ENCODE measurements at regions of chr15 and their contacts with region 1.

Region 1: DNA sequence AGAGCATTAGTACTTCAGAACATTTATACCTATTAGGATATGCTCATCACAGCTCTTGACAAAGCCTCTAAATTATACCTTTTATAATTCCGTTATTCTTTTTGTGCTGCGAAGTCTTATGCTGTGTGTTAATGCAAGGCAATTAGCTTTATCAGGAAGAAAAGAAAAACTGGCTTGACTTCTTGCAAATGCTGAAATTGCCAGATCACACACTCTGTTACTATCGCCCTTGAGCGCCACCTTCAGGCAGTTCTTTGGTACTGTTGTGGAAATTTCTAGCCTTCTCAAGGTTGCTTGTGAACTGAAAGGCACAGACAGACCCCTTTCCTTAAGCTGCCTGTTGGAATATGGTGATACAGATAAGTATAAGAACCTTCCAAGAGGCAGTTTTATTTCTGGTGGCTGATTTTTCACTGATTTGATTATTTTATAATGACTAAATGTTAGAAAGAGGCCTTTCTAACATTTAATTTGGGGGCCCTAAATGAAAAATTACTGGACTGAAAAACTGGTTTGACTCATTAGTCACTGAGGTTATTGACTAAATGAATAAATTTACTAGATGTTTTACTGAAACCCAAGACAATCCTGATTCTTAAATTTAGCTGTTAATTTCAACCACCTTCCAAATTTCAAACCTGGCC is 126.2 kb upstream of the RASGRP1 start:
- DNase-seq: peak; percentile 49
- CTCF ChIP-seq: peak; percentile 77

Region 2: DNA sequence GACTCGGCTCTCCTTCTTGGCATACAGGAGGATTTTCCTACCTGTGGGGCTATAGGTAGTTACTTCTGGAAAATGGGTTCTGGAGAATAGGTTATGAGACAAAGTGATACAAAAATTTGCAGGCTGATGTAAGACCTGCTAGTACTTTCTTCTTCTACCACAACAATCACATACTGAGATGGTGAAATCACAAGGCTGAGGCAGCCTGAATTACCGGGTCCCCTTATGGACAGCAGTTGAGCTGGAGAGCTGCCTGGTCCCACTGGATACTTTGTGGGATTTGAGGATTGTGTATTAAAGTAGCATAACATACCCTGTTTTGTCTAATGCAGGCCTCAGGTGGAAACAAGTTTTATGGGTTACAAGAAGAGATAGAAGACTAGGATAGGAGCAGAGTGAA is 323.3 kb before region 1 on chr15:
- CTCF ChIA-PET with region 1: no interaction called
- POLR2A ChIA-PET with region 1: no interaction called
- DNase-seq: no peak
- CTCF ChIP-seq: no peak

Region 3: DNA sequence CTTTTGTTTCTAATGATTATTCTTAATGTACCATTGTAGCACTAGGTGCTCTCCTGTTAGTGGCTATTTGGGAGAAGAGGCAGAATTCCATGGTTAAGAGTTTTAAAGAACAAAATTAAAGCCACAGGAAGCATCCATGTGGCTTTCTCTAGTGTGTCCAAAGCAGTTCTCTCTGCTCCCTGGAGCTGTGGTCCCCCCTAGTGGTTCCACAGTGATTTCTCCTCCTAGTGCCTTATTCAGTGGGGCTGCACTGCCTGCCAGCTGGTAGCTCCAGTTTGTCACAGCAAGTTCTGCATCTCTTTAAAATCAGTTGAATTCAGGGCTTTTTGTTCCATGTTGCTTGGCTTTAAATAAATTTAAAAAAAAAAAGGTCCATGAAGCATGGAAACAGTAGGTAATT is 276.5 kb before region 1 on chr15:
- CTCF ChIA-PET with region 1: no interaction called
- POLR2A ChIA-PET with region 1: no interaction called
- DNase-seq: no peak
- CTCF ChIP-seq: no peak

Region 4: DNA sequence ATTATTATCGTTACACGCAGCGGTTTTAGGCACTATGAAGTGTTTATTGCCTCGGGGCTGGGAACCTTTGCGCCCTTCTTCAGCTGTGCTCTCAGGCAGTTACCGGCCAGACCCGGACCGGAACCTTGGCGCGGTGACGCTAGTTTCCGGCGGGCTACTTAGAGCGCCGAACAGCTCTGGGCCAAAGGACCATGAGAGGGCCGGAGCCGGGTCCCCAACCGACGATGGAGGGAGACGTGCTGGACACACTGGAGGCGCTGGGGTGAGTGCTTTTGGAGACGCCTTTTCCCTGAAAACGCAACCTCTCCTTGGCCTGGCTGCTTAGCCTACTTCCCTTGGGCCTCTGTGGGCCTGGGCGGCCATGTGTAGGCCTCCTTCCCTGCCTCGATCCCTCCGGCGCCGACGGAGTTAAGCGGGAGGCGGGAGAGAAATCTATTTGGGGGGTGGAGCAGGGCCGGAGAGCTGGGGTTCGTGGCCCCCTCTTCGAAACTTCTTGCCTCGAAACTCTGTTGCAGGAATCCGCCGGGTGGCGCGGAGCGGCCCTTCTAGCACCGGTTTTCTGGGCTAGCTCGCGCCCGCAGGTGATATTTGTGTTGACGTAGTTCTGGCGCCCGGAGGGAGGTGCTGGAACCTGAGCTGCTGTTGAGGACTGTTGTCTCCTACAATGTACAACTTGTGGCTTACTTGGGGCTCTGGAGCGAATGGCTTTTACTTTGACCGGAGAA is 236.7 kb before region 1 on chr15 and contains the start of gene FAM98B:
- CTCF ChIA-PET with region 1: interaction called, 25 read pairs
- POLR2A ChIA-PET with region 1: interaction called, 3 read pairs
- DNase-seq: peak; percentile 84
- CTCF ChIP-seq: no peak

Region 5: GRCh38 chr15:38512901-38513300 is 177.9 kb before region 1 on chr15:
- CTCF ChIA-PET with region 1: interaction called, 13 read pairs
- POLR2A ChIA-PET with region 1: no interaction called
- DNase-seq: no peak
- CTCF ChIP-seq: no peak

Region 6: GRCh38 chr15:38545179-38545578 is 145.6 kb before region 1 on chr15:
- CTCF ChIA-PET with region 1: interaction called, 10 read pairs
- POLR2A ChIA-PET with region 1: no interaction called
- DNase-seq: no peak
- CTCF ChIP-seq: no peak

Region 7: DNA sequence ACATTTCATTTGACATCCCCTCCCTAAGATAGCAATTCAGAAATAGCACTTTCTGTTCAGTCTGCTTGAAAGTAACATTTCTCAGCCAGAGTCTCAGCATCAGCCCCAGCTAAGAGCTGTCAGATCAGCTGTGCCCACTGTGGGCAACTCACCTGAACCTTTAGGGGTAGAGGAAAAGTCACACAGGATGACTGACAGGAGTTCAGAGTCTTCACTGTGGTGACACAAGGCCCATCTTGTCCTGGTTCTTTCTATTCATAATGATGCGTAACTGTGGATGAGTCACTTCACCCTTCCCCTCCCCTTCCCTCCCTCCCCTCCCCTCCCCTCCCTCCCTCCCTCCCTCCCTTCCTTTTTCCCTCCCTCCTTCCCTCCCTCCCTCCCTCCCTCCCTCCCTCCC is 30.1 kb before region 1 on chr15:
- CTCF ChIA-PET with region 1: interaction called, 32 read pairs
- POLR2A ChIA-PET with region 1: no interaction called
- DNase-seq: no peak
- CTCF ChIP-seq: no peak

Region 8: DNA sequence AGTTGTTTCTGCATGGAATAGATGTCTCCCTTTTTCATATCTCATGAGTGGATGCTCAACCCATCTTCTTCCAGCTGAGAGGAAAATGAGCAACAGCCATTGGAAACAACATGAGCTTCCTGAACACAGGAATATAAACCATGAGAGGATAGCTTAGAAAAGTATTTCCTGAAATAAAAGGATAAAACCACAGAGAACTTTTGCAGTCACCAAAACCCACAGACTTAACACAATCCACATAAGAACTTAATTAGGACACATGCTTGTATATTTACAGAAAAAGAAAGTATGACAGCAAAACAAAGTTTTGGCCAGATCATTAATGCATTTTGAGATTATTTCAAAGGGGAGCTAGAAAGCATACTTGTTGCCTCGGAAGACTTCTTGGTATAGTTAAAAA is 54.3 kb after region 1 on chr15:
- CTCF ChIA-PET with region 1: no interaction called
- POLR2A ChIA-PET with region 1: no interaction called
- DNase-seq: no peak
- CTCF ChIP-seq: no peak

Region 9: DNA sequence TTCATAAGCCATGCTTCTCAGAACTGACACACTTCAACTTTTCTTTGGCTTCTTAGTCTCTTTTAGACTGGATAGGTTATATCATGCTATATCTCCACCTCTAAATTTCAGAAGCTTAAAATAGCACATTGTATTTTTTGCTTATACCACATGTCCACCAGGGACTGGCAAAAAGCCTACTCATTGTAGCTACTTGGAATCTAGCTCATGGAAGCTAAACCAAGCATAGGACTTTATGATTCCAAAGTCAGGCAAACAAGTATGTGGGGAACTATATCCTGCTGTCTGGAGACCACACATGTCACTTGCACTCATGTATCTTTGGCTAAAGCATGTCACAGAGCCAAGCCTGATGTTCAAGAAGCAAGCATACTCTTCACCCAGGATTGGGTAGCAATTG is 118.8 kb after region 1 on chr15:
- CTCF ChIA-PET with region 1: no interaction called
- POLR2A ChIA-PET with region 1: no interaction called
- DNase-seq: no peak
- CTCF ChIP-seq: no peak

Measured in GM10248 (cell line).